Pancreas (tissue), 10 donors: ENCODE measurements at regions of chr13 and their contacts with region 1.

Region 1: GRCh38 chr13:29354377-29354776 is 241.1 kb downstream of the SLC7A1 start:
- DNase-seq: no peak
- ATAC-seq: no peak
- H3K4me3 ChIP-seq: no peak overlapping the region
- H3K27ac ChIP-seq: no peak overlapping the region
- H3K4me1 ChIP-seq: no peaks in the 10 kb centered on the region
- H3K27me3 ChIP-seq: no peaks in the 10 kb centered on the region
- CTCF ChIP-seq: no peak

Region 2: DNA sequence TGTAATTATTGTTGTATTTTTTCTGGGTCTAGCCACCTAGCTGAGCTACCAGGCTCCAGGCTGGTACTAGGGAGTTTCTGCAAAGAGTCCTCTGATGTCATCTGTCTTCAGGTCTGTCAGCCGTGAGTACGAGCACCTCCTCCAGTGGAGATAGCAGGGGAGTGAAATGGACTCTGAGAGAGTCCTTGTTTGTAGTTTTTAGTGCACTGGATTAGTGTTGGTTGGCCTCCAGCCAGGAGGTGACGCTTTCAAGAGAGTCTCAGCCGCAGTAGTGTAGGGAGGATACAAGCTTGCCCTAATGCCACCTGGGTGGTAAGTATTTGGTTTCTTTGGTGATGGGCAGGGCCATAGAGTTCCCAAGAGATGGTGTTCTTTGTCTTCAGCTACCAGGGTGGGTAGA is 143.7 kb before region 1 on chr13:
- intact Hi-C with region 1: loop called in 1 of 3 experiments (anchors 5 kb)
- DNase-seq: no peak
- ATAC-seq: no peak
- H3K4me3 ChIP-seq: no peak overlapping the region
- H3K27ac ChIP-seq: no peak overlapping the region
- H3K4me1 ChIP-seq: no peaks in the 10 kb centered on the region
- H3K27me3 ChIP-seq: no peaks in the 10 kb centered on the region
- CTCF ChIP-seq: no peak

Region 3: GRCh38 chr13:29222458-29222857 is 131.9 kb before region 1 on chr13:
- intact Hi-C with region 1: no loop called
- DNase-seq: no peak
- ATAC-seq: no peak
- H3K4me3 ChIP-seq: no peak overlapping the region
- H3K27ac ChIP-seq: no peak overlapping the region
- H3K4me1 ChIP-seq: no peaks in the 10 kb centered on the region
- H3K27me3 ChIP-seq: no peaks in the 10 kb centered on the region
- CTCF ChIP-seq: no peak